ENCODE measurements at regions of chr9 and their contacts with region 1.

Region 1: GRCh38 chr9:37913480-37914153 is 9.7 kb upstream of the SLC25A51 start:
- DNase-seq: peak; percentile 88
- H3K4me3 Mint-ChIP-seq: no peak overlapping the region
- H3K27ac Mint-ChIP-seq: no peak overlapping the region
- H3K4me1 Mint-ChIP-seq: no peaks in the 10 kb centered on the region
- H3K27me3 Mint-ChIP-seq: no peaks in the 10 kb centered on the region

Region 2: DNA sequence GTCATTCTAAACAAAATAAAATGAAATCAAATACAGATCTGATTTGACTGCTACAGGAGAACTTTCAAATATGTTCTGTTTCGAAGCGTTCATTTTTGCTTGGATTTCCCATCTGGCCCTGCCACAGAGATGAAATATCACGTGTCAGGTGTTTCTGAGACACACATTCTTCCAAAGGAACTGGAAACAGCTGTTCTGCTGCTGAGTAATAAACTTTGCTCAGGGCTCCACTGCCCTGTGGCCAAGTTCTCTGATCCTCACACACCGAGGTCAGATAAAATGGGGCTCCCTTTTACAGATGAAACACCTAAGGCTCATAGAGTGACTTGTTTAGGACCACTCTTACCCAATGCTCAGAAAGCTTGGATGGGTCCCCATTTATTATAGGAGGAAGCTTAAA is 220.4 kb before region 1 on chr9:
- CTCF ChIA-PET with region 1: no interaction called
- POLR2A ChIA-PET with region 1: no interaction called
- intact Hi-C with region 1: no loop called
- DNase-seq: no peak
- H3K4me3 Mint-ChIP-seq: no peak overlapping the region
- H3K27ac Mint-ChIP-seq: no peak overlapping the region
- H3K4me1 Mint-ChIP-seq: no peaks in the 10 kb centered on the region
- H3K27me3 Mint-ChIP-seq: peaks cover 31% of the 10 kb centered on the region

Region 3: GRCh38 chr9:38068866-38069629 is 155.4 kb after region 1 on chr9 and contains the start of gene SHB:
- CTCF ChIA-PET with region 1: interaction called, 22 read pairs
- POLR2A ChIA-PET with region 1: no interaction called
- intact Hi-C with region 1: no loop called
- DNase-seq: peak; percentile 85
- H3K4me3 Mint-ChIP-seq: peak within 1 kb of the TSS; percentile 68
- H3K27ac Mint-ChIP-seq: no peak within 1 kb of the TSS
- H3K4me1 Mint-ChIP-seq: peaks cover 19% of the 10 kb centered on the region
- H3K27me3 Mint-ChIP-seq: peaks cover 6% of the 10 kb centered on the region
- total RNA-seq, gene SHB: 1.1 to 1.2 TPM

Region 4: GRCh38 chr9:38160613-38161215 is 247.1 kb after region 1 on chr9:
- CTCF ChIA-PET with region 1: interaction called, 107 read pairs
- POLR2A ChIA-PET with region 1: no interaction called
- intact Hi-C with region 1: loop called (anchors 1 kb)
- DNase-seq: peak; percentile 69
- H3K4me3 Mint-ChIP-seq: peak overlapping the region; percentile 7
- H3K27ac Mint-ChIP-seq: no peak overlapping the region
- H3K4me1 Mint-ChIP-seq: no peaks in the 10 kb centered on the region
- H3K27me3 Mint-ChIP-seq: no peaks in the 10 kb centered on the region

Region 5: GRCh38 chr9:38362852-38363593 is 449.4 kb after region 1 on chr9:
- CTCF ChIA-PET with region 1: interaction called, 6 read pairs
- POLR2A ChIA-PET with region 1: no interaction called
- intact Hi-C with region 1: loop called (anchors 10 kb)
- DNase-seq: peak; percentile 19
- H3K4me3 Mint-ChIP-seq: peak overlapping the region; percentile 18
- H3K27ac Mint-ChIP-seq: no peak overlapping the region
- H3K4me1 Mint-ChIP-seq: no peaks in the 10 kb centered on the region
- H3K27me3 Mint-ChIP-seq: no peaks in the 10 kb centered on the region

Region 6: DNA sequence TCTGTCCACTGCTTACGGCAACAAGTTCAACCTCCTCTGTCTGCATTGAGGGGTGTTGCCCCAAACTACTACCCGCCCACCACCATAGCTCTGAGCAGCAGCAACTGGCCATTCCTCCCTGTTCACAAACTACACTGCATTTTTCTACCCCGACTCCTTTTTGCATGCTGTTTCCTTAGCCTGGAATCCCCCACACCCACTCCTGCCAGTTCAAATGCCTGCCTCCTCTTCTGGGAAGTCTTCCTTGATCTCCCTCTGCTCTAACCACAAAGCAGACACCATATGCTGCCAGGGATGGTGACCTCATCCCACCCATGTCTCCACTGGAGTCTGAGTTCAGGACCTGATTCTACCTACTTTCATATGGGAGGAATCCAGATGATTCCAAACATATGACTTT is 492.2 kb after region 1 on chr9:
- CTCF ChIA-PET with region 1: no interaction called
- POLR2A ChIA-PET with region 1: no interaction called
- intact Hi-C with region 1: loop called (anchors 1 kb)
- DNase-seq: no peak
- H3K4me3 Mint-ChIP-seq: no peak overlapping the region
- H3K27ac Mint-ChIP-seq: no peak overlapping the region
- H3K4me1 Mint-ChIP-seq: peaks cover 2% of the 10 kb centered on the region
- H3K27me3 Mint-ChIP-seq: peaks cover 14% of the 10 kb centered on the region

Region 7: GRCh38 chr9:38432922-38433510 is 519.4 kb after region 1 on chr9:
- CTCF ChIA-PET with region 1: interaction called, 32 read pairs
- POLR2A ChIA-PET with region 1: no interaction called
- intact Hi-C with region 1: loop called (anchors 1 kb)
- DNase-seq: no peak
- H3K4me3 Mint-ChIP-seq: no peak overlapping the region
- H3K27ac Mint-ChIP-seq: no peak overlapping the region
- H3K4me1 Mint-ChIP-seq: no peaks in the 10 kb centered on the region
- H3K27me3 Mint-ChIP-seq: no peaks in the 10 kb centered on the region